Psoas muscle (tissue), 8 donors: ENCODE measurements at regions of chr9 and their contacts with region 1.

Region 1: GRCh38 chr9:98207606-98208005 is 15.2 kb upstream of the CORO2A start:
- DNase-seq: peak in 1 of 2 donors; percentile 23
- ATAC-seq: no peak
- H3K4me3 ChIP-seq: no peak overlapping the region
- H3K27ac ChIP-seq: no peak overlapping the region
- H3K4me1 ChIP-seq: peaks cover 3% of the 10 kb centered on the region
- H3K27me3 ChIP-seq: no peaks in the 10 kb centered on the region
- CTCF ChIP-seq: no peak

Region 2: GRCh38 chr9:97928986-97929604 is 278.5 kb before region 1 on chr9:
- intact Hi-C with region 1: loop called in 1 of 2 experiments (anchors 5 kb)
- DNase-seq: no peak
- ATAC-seq: no peak
- H3K4me3 ChIP-seq: no peak overlapping the region
- H3K27ac ChIP-seq: no peak overlapping the region
- H3K4me1 ChIP-seq: no peaks in the 10 kb centered on the region
- H3K27me3 ChIP-seq: peaks cover 0 to 12% (median 8%) of the 10 kb centered on the region in 3 donors
- CTCF ChIP-seq: no peak

Region 3: DNA sequence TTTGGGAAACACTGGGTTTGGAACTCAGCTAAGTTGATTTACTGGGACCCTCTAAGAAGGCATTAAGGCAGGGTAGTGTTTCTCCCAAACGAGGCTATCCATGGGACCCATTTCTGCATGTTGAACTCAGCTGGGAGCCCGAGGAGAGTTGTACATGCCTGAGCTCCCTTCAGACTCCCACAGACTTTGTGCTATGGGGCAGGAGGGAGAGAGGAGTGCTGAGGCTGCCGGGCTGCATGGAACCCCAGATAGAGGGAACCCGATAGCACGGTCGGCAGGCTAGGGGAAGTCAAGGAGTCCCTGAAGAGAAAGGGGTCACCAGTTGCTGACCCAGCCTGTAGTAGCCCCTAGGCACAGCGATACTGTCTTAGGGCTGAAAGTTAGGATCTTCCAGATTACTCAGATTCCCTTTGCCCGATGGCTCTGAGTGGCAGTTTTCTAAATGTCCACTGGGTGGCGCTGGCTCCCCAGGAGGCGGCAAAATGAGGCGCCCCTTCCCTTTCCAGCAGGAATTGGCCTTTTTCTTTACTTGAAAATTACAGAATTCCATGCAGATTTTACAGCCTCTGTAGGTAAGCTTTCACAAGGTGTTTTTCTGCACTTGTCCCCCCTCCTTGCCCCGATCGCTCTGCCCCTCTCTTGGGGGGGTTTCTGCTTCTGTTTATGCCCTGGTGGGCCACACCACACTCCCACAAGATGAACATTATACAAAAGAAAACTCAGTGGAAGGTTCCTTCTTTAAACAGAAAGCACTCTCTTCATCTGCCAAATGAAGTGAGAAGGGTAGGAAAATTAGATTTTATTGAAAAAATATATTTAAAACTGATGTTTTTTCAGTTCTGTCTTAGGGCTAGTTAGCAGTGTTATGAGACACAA is 133.3 kb before region 1 on chr9:
- intact Hi-C with region 1: loop called in 1 of 2 experiments (anchors 5 kb)
- DNase-seq: peak; percentile 50 to 74
- ATAC-seq: peak in 3 of 4 donors; percentile 53 to 76 (median 67)
- H3K4me3 ChIP-seq: no peak overlapping the region
- H3K27ac ChIP-seq: no peak overlapping the region
- H3K4me1 ChIP-seq: no peaks in the 10 kb centered on the region
- H3K27me3 ChIP-seq: no peaks in the 10 kb centered on the region
- CTCF ChIP-seq: peak; percentile 88

Region 4: GRCh38 chr9:98263482-98264357 is 56.1 kb after region 1 on chr9:
- intact Hi-C with region 1: loop called (anchors 1 to 5 kb)
- DNase-seq: peak; percentile 78 to 89
- ATAC-seq: peak; percentile 82 to 99 (median 92)
- H3K4me3 ChIP-seq: no peak overlapping the region
- H3K27ac ChIP-seq: no peak overlapping the region
- H3K4me1 ChIP-seq: no peaks in the 10 kb centered on the region
- H3K27me3 ChIP-seq: no peaks in the 10 kb centered on the region
- CTCF ChIP-seq: peak; percentile 92

Region 5: DNA sequence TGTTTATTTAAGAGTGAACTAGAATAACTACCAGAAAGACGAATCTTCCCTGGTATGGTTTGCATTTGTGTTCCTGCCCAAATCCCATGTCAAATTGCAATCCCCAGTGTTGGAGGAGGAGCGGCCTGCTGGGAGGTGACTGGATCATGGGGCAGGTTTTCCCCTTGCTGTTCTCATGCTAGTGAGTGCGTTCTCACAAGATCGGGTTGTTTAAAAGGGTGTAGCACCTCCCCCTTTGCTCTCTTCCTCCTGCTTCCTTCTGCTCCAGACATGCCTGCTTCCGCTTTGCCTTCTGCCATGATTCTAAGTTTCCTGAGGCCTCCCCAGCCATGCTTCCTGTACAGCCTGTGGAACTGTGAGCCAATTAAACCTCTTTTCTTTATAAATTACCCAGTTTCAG is 258.2 kb after region 1 on chr9:
- intact Hi-C with region 1: no loop called
- DNase-seq: no peak
- ATAC-seq: no peak
- H3K4me3 ChIP-seq: no peak overlapping the region
- H3K27ac ChIP-seq: no peak overlapping the region
- H3K4me1 ChIP-seq: no peaks in the 10 kb centered on the region
- H3K27me3 ChIP-seq: peaks cover 0 to 2% (median 0%) of the 10 kb centered on the region in 3 donors
- CTCF ChIP-seq: no peak